Posterior vena cava (tissue), 2 donors: ENCODE measurements at regions of chr15 and their contacts with region 1.

Region 1: DNA sequence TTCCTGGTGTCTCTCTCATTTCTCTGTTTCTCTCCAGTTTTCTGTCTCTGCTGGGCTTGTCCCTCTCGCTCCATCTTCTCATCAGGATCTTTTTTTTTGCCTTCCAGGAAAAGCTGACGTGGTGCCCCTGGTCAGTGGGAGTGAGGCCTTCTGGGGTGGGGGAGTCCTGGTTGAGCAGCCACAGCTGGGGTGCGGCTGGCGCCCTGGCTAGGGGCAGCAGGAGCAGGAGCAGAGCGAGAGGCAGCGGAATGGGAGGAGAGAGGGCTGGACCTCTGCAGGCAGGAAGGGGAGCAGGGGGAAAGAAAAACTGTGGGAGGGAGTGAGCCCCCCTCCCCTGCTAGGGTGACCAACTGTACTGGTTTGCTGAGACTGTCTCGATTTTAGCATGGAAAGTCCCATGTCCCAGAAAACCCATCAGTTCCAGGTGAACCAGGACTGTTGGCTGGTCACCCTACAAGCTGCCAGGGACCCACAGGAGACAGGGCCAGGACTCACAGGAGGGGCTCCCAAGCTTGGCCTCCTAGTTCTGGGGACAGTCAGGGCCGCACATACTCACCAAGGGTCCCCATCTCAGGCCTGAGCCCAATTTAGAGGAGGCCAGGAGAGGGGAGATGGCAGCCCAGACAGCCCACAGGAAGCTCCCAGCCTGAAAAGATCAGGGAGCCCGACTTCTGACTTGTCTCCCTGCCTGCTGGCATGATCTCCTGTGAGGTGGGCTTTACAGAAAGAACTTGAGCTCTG is 2.9 kb upstream of the ISLR start:
- DNase-seq: no peak

Region 2: DNA sequence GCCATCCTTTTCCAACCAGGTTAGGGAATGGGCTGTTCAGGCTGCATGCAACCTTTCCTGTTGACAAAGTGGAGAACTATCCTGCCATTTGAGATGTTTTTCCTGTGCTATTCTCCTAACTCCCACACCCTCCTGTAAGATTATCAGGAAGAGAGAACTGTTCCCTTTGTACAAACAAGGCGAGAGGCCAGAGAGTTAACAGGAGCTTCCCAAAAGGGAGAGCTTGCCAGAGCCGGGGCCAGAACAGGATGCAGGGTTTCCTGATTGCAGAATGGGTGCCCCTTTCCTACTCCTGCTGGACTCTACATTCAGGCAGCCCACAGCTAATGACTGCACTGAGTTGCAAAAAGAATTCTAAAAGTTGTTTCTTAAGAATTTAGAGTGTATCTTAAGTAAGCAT is 159.0 kb before region 1 on chr15:
- intact Hi-C with region 1: no loop called
- DNase-seq: peak; percentile 75

Region 3: GRCh38 chr15:74208901-74209559 is 38.4 kb after region 1 on chr15:
- intact Hi-C with region 1: loop called in 1 of 2 experiments (anchors 1 kb)
- DNase-seq: no peak

Region 4: GRCh38 chr15:74482661-74483060 is 312.0 kb after region 1 on chr15:
- intact Hi-C with region 1: no loop called
- DNase-seq: no peak

Region 5: DNA sequence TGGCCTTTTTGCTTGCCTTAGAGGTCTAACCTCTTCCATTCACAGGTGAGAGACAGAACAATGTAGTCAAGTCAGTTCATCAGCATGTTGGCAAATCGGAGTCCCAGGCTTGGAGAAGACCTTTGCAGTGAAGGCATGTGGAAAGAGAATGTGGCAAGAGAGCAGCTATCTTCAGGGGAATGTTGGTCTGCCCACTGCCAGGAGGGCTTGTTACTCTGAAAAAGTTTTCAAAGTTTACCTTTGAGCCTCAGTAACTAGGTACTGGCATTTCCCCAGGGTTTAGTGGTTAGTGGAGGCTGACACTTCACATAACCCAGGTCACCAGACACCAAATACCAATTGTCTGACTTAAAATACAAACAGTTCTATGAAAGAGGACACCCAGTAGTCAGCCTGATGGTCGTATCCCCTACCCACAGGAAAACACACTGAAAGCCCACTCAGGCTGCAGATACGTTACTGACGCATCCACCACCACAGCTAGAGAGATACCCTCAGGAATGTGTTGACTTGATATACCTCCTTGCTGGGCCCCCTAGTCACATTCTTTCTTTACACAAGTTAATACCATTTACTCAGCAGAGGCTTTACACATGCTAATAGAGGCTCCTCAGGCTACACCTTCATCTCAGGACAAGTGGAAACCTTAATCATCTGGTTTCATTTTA is 360.6 kb after region 1 on chr15:
- intact Hi-C with region 1: no loop called
- DNase-seq: no peak